ENCODE measurements at regions of chr9 and their contacts with region 1.

Region 1: DNA sequence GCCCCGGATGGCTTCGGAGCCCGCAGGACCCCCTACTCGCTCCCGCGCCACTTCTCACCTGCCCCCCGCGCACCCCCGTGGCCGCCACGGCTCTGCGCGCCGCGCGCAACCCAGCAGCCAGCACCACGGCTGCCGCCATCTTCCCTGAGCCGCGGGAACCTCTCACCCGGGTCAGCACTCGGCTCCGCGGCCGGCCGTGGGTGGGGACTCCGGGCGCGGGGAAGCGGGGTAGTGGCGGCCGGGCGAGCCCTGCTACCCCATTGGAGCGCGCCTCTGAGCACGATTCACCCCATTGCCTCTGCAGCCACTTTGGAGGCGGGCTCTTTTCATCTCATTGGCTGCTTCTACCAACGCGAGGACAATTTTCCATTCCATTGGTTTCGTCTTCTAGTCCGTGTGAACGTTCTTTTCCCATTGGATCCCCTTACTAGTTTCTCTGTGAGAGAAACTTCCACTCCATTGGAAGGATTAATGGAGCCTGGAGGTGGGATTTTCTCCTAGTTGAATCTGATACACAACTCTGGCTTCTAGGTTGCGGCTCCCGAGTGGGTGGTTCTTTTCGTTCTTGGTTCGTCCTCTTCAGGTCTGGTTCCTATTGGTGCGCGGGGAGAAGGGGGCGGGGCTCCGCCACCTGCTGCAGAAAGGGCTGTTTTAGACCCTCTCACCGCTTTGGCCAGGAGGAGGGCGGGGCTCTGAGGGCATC is at the start of gene HINT2:
- DNase-seq: peak; percentile 97 to 99
- H3K4me3 ChIP-seq: peak within 1 kb of the TSS; percentile 89 to 90
- H3K27ac ChIP-seq: peak within 1 kb of the TSS; percentile 92 to 96
- H3K4me1 ChIP-seq: peaks cover 8 to 27% of the 10 kb centered on the region in 2 donors
- H3K27me3 ChIP-seq: no peaks in the 10 kb centered on the region
- CTCF ChIP-seq: no peak
- total RNA-seq, gene HINT2: 21.6 TPM

Region 2: GRCh38 chr9:35657546-35658136 is 157.4 kb before region 1 on chr9 and contains the start of gene RMRP:
- intact Hi-C with region 1: loop called (anchors 5 kb)
- DNase-seq: peak; percentile 90 to 99
- H3K4me3 ChIP-seq: peak within 1 kb of the TSS; percentile 88 to 99
- H3K27ac ChIP-seq: peak within 1 kb of the TSS; percentile 97 to 100
- H3K4me1 ChIP-seq: peaks cover 5 to 35% of the 10 kb centered on the region in 2 donors
- H3K27me3 ChIP-seq: no peaks in the 10 kb centered on the region
- CTCF ChIP-seq: peak; percentile 32 to 56 (median 34)
- total RNA-seq, gene RMRP: 17,070 TPM

Region 3: DNA sequence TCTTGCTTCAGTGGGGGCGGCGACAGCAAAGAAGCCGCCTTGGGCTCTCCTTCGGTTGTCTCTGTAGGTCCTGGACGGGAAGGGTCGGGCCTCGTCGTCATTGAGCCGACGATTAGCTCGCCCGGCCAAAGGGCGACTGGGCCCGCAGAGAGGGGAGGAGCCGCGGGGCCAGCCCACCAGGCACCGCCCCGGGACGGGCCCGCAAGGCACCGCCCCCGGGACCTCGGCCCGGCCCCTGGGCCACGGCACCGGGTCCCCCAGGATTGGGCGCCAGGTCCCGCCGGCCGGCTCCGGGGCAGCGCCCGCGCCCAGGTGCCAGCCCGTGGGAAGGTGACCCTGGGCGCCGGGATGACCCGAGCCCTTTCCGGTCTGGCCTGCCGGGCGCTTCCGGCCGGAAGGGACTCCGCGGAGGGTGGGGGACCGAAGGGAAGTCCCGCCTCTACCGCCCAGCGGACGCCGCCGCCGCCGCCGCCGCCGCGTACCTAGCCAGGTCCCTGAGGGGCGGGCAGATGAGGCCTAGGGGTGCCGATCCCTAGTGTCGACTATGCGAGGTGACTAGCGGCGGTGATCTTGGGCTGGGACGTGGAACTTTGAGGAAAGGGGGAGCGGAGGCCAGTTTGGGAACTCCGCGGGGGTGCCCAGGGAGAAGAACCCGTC is 66.0 kb before region 1 on chr9 and contains the starts of genes GBA2 and RGP1:
- intact Hi-C with region 1: loop called (anchors 2 kb)
- DNase-seq: peak in 1 of 2 donors; percentile 89
- H3K4me3 ChIP-seq: peak within 1 kb of the TSS; percentile 87 to 94
- H3K27ac ChIP-seq: peak within 1 kb of the TSS; percentile 94 to 96
- H3K4me1 ChIP-seq: peaks cover 10 to 33% of the 10 kb centered on the region in 2 donors
- H3K27me3 ChIP-seq: no peaks in the 10 kb centered on the region
- CTCF ChIP-seq: no peak
- total RNA-seq, gene GBA2: 40.7 TPM
- total RNA-seq, gene RGP1: 24.8 TPM

Region 4: DNA sequence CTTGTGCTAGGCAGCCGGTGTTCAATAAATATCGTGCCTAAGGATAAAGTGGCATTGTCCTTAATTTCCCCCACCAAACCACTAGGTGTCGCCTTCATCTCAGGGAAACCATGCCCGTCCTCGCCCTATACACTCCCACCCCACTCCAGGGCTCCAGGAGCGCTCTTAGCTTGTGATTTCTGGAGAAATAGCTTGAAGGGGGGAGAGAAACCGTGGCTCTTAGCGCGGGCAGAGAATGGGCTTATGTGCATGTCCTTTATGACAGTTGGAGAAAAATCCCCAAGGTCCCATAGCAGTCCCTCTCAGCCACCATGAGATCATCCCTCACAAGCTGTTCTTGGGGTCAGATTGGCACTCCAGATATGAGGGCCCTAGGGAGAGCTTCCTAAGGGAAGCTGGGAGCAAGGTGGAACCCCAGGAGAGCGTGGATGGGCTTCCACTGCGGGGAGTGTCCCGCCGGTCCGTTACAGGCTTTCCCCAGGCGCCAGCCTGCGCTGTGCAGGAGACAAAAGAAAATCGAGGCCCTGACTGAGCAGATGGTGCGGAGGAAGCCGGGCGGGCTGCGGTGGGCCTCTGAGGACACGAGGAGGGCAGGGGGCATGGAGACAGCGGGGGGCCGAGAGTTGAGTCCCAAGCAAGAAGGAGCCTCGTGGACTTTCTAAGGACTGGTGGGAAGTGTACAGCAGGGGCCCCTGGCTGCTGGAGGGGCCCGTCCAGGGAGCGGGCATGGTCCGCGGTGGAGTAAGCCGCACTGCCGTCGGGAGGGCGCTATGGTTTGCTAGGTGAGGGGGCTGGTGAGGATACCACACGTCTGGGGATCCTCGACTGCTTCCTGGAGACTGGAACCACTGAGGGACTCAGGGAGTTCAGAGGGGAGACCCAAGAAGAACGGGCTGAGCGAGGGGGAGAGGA is 24.4 kb before region 1 on chr9:
- intact Hi-C with region 1: loop called (anchors 1 kb)
- DNase-seq: peak in 1 of 2 donors; percentile 88
- H3K4me3 ChIP-seq: peak overlapping the region; percentile 64 to 87
- H3K27ac ChIP-seq: peak overlapping the region; percentile 81 to 87
- H3K4me1 ChIP-seq: peaks cover 5 to 28% of the 10 kb centered on the region in 2 donors
- H3K27me3 ChIP-seq: no peaks in the 10 kb centered on the region
- CTCF ChIP-seq: peak; percentile 76 to 90 (median 83)

Region 5: GRCh38 chr9:35844716-35845270 is 29.8 kb after region 1 on chr9:
- intact Hi-C with region 1: loop called (anchors 2 kb)
- DNase-seq: peak in 1 of 2 donors; percentile 72
- H3K4me3 ChIP-seq: no peak overlapping the region
- H3K27ac ChIP-seq: peak overlapping the region; percentile 8 to 44
- H3K4me1 ChIP-seq: peaks cover 0 to 26% of the 10 kb centered on the region in 2 donors
- H3K27me3 ChIP-seq: no peaks in the 10 kb centered on the region
- CTCF ChIP-seq: no peak

Measured in ascending aorta (tissue), 2 donors.